Activated CD8-positive, alpha-beta T cell treated with anti-CD3 and anti-CD28 coated beads for 36 hours (primary cell): ENCODE measurements at regions of chr2 and their contacts with region 1.

Region 1: DNA sequence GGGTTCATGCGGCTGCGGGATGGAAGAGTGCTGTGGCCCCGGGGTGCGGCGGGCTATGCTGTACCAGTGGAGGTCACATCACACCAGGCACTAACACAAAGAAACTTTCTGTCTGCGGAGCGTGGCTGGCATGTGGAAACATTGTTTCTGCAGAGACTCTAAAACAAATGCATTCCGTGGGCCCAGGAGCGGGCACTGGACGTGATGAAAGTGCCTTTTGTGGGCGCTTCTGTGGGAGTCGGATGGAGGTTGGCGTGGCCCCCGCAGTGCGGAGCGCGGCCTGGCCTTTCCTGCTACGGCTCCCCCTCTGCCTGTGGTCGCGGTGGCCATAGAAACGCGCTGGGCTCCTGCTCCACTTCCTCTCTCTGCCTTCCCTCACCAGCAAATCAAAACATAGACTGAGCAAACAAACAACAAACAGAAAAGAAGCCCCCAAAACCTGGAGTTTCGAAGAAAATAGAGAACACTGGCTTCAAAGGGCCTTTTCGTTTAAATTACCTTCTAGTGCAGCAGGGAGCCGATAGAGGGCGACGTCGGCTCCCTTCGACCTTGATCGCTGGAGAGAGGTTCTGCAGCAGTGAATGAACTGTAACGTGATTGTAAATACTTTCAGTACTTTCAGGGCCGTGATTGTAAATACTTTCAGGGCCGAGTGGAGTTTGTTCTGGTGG is 51.4 kb downstream of the KIF5C start:
- DNase-seq: peak; percentile 68
- ATAC-seq: peak; percentile 88
- H3K4me3 Mint-ChIP-seq: peak overlapping the region; percentile 77
- H3K27ac Mint-ChIP-seq: peak overlapping the region; percentile 85
- H3K4me1 Mint-ChIP-seq: peaks cover 15% of the 10 kb centered on the region
- H3K27me3 Mint-ChIP-seq: no peaks in the 10 kb centered on the region
- CTCF ChIP-seq: peak; percentile 77

Region 2: GRCh38 chr2:148936859-148937450 is 10.5 kb after region 1 on chr2:
- CTCF ChIA-PET with region 1: interaction called, 13 read pairs
- POLR2A ChIA-PET with region 1: no interaction called
- intact Hi-C with region 1: no loop called
- DNase-seq: no peak
- ATAC-seq: no peak
- H3K4me3 Mint-ChIP-seq: no peak overlapping the region
- H3K27ac Mint-ChIP-seq: no peak overlapping the region
- H3K4me1 Mint-ChIP-seq: no peaks in the 10 kb centered on the region
- H3K27me3 Mint-ChIP-seq: no peaks in the 10 kb centered on the region
- CTCF ChIP-seq: no peak